Prostate gland (tissue), 2 donors: ENCODE measurements at regions of chr1 and their contacts with region 1.

Region 1: GRCh38 chr1:8463144-8463927 is 145.4 kb downstream of the SLC45A1 start:
- DNase-seq: peak; percentile 44
- H3K4me3 ChIP-seq: no peak overlapping the region
- H3K27ac ChIP-seq: peak overlapping the region; percentile 69 to 72
- H3K4me1 ChIP-seq: peaks cover 43% of the 10 kb centered on the region
- H3K27me3 ChIP-seq: no peaks in the 10 kb centered on the region
- CTCF ChIP-seq: no peak
- POLR2A ChIP-seq: no peak

Region 2: DNA sequence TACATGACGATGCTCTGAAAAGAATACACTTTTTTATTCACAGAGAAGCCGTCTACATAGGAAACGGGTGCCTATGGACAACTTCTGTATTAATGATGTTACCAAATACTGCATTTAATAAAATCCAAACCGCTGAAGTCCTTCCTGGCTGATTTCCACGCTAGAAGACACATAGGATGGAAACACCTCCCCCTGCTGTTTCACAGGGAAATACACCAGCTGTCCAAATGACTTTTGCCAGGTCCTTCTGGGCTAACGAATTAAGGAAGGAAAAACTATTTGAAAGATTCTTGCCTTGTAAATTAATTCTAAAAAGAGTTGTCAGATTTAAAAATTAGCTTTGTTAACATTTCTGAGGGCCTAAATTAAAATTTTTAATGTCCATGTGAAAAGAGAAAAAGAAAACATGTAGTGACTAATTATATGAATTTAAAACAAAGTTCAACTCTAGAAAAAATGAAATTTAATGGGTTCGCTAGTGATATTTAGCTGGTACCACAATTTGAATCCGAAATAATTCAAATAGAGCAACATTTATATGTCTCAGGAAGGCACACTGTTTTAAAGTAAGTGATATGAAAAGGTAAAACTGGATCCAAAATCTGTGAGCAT is 208.1 kb after region 1 on chr1:
- intact Hi-C with region 1: loop called (anchors 5 kb)
- DNase-seq: peak; percentile 37
- H3K4me3 ChIP-seq: no peak overlapping the region
- H3K27ac ChIP-seq: no peak overlapping the region
- H3K4me1 ChIP-seq: peaks cover 10% of the 10 kb centered on the region
- H3K27me3 ChIP-seq: no peaks in the 10 kb centered on the region
- CTCF ChIP-seq: peak in 3 of 4 experiments; percentile 58 to 78 (median 75)
- POLR2A ChIP-seq: no peak

Region 3: DNA sequence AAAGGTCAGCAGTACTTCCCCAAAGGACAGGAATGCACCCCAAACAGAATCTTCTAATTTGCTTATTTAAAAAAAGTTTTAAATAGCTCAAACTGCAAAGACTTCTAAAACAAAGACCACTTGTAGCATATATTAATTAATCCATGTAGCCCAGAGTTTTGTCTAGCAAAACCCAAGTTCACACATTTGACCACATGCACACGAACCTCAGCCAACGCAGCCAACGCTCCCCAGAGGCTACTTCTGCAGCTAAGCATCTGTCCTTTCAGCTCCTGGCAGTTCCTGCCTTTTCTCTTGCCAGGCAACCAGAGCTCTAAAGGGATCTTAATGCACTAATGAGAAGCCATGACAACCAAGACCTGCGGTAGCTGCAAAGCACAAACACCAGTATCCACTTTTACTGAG is 264.5 kb after region 1 on chr1:
- intact Hi-C with region 1: loop called (anchors 10 kb)
- DNase-seq: no peak
- H3K4me3 ChIP-seq: no peak overlapping the region
- H3K27ac ChIP-seq: no peak overlapping the region
- H3K4me1 ChIP-seq: peaks cover 4% of the 10 kb centered on the region
- H3K27me3 ChIP-seq: no peaks in the 10 kb centered on the region
- CTCF ChIP-seq: no peak
- POLR2A ChIP-seq: no peak